Naive thymus-derived CD4-positive, alpha-beta T cell (primary cell): ENCODE measurements at regions of chr9 and their contacts with region 1.

Region 1: DNA sequence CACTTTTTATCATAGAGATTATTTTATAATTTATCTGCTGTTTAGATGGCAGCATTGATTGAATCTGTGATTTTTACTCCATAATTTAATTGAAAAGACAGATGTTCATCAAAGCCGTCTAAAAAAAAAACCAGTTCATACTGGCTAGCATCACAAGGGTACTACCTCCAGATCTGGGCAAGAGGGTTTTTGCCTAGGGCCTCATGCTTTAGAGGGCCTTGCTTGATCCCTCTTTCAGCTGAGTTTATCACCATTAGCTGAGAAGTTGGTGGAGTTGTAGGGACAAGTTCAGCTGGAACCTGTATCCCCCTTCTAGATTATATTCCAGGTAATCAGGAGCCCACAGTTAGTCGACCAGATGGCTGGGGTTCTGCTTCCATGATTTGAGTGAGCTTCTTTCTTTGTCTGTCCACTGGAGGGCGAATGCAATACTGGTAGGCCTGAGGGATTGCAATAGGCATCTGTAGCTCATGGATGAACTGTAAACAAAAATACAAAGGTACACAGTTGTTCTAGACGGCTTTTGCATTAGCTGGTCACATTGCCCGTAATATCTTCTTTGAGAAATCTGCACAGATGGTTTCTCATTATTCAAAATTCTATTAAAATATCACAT is 88.8 kb downstream of the PCSK5 start:
- DNase-seq: no peak
- ATAC-seq: no peak
- H3K4me3 ChIP-seq: no peak overlapping the region
- H3K4me3 Mint-ChIP-seq: peak overlapping the region in 1 of 10 donors; percentile 2
- H3K27ac ChIP-seq: no peak overlapping the region
- H3K27ac Mint-ChIP-seq: no peak overlapping the region
- H3K4me1 ChIP-seq: peaks cover 0 to 9% of the 10 kb centered on the region in 2 donors
- H3K4me1 Mint-ChIP-seq: peaks cover 4 to 75% (median 67%) of the 10 kb centered on the region in 7 donors
- H3K27me3 ChIP-seq: no peaks in the 10 kb centered on the region
- H3K27me3 Mint-ChIP-seq: no peaks in the 10 kb centered on the region

Region 2: GRCh38 chr9:75930730-75931321 is 48.4 kb before region 1 on chr9:
- CTCF ChIA-PET with region 1: no interaction called
- POLR2A ChIA-PET with region 1: no interaction called
- intact Hi-C with region 1: loop called in 1 of 2 experiments (anchors 5 kb)
- DNase-seq: no peak
- ATAC-seq: no peak
- H3K4me3 ChIP-seq: no peak overlapping the region
- H3K4me3 Mint-ChIP-seq: no peak overlapping the region
- H3K27ac ChIP-seq: no peak overlapping the region
- H3K27ac Mint-ChIP-seq: peak overlapping the region in 4 of 9 donors; percentile 2 to 14 (median 6)
- H3K4me1 ChIP-seq: no peaks in the 10 kb centered on the region
- H3K4me1 Mint-ChIP-seq: peaks cover 0 to 62% (median 47%) of the 10 kb centered on the region in 7 donors
- H3K27me3 ChIP-seq: no peaks in the 10 kb centered on the region
- H3K27me3 Mint-ChIP-seq: no peaks in the 10 kb centered on the region

Region 3: DNA sequence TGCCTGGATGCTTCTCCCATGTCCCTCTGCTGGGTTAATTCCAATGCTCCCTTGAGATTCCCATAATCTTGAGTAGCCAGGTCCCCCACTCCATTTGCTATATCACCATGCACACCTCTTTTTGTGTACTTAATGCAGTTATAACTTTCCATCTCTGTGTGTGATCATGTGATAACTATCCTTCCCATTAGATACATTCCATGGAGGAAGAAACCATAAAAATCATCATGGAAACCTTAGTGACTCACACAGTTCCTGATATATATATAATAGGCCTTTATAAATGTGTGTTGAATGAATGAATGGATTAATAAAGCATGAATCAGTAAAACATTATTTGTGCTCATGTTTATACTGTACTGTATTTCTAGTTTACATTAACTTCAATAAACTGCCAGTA is 15.8 kb after region 1 on chr9:
- CTCF ChIA-PET with region 1: no interaction called
- POLR2A ChIA-PET with region 1: interaction called, 4 read pairs
- intact Hi-C with region 1: loop called in 1 of 2 experiments (anchors 2 kb)
- DNase-seq: no peak
- ATAC-seq: no peak
- H3K4me3 ChIP-seq: no peak overlapping the region
- H3K4me3 Mint-ChIP-seq: peak overlapping the region in 1 of 10 donors; percentile 3
- H3K27ac ChIP-seq: no peak overlapping the region
- H3K27ac Mint-ChIP-seq: peak overlapping the region in 3 of 9 donors; percentile 11 to 47 (median 30)
- H3K4me1 ChIP-seq: peaks cover 0 to 9% of the 10 kb centered on the region in 2 donors
- H3K4me1 Mint-ChIP-seq: peaks cover 0 to 77% (median 50%) of the 10 kb centered on the region in 7 donors
- H3K27me3 ChIP-seq: no peaks in the 10 kb centered on the region
- H3K27me3 Mint-ChIP-seq: no peaks in the 10 kb centered on the region

Region 4: DNA sequence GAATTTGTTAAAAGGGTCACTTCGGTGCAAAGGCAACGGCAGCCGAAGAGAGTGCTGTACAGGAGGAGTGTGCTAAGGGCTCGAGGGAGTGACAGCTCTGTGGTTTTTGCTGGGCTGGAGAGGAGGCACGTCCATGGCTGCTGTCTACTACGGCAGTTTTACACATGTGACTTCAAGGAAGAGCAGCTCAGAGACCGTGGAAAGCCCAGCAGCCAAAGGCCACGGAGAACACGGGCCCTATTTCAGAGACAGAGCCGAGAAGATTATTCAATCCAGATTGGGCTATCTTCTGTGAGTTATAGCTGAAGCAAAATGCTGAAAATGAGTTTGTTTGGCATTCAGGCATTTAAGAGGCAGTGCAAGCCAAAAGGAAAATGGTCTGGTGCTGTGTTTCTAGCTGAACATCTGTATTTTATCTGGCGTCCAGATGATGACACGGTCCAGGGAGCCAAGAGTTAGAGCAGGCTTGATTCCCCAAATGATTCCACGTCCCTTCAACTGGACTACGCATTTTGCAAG is 318.5 kb after region 1 on chr9:
- CTCF ChIA-PET with region 1: no interaction called
- POLR2A ChIA-PET with region 1: no interaction called
- intact Hi-C with region 1: no loop called
- DNase-seq: no peak
- ATAC-seq: no peak
- H3K4me3 ChIP-seq: no peak overlapping the region
- H3K4me3 Mint-ChIP-seq: peak overlapping the region in 5 of 10 donors; percentile 5 to 32 (median 12)
- H3K27ac ChIP-seq: no peak overlapping the region
- H3K27ac Mint-ChIP-seq: peak overlapping the region in 1 of 9 donors; percentile 43
- H3K4me1 ChIP-seq: no peaks in the 10 kb centered on the region
- H3K4me1 Mint-ChIP-seq: peaks cover 0 to 14% (median 2%) of the 10 kb centered on the region in 7 donors
- H3K27me3 ChIP-seq: no peaks in the 10 kb centered on the region
- H3K27me3 Mint-ChIP-seq: no peaks in the 10 kb centered on the region